ENCODE measurements at regions of chr20 and their contacts with region 1.

Region 1: DNA sequence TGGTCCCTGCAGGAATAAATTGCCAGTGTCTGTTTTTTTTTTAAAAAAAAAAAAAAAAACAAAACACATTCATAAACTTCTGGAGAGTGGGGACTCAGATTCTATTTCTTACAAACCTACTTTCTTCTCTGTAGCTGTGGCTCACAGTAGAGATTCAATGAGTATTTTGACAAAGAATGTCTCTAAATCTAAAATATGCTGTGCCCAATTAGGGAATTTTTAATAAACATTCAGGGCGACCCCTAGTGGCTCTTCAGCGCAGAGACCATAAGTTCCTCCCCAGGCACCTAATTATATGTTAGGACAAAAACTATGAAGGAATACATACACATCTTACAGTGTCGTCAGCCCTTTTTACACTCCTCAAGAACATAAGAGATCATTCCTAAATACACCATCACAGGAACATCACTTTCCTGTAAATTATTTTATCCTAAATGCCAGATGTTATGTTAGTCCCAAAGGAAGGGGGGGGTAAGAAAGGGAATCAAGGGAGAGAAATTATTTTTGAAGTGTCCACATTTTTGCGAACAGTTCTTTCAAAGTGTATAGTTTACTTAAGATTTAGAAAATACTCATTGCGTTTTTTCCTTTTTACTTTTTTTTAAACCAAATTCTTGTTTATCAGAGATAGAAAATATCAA is 21.8 kb upstream of the NAA20 start:
- DNase-seq: peak; percentile 57
- CTCF ChIP-seq: peak; percentile 72

Region 2: GRCh38 chr20:19784511-19785172 is 210.7 kb before region 1 on chr20:
- CTCF ChIA-PET with region 1: interaction called, 25 read pairs
- POLR2A ChIA-PET with region 1: no interaction called
- DNase-seq: peak; percentile 60
- CTCF ChIP-seq: peak; percentile 48

Region 3: DNA sequence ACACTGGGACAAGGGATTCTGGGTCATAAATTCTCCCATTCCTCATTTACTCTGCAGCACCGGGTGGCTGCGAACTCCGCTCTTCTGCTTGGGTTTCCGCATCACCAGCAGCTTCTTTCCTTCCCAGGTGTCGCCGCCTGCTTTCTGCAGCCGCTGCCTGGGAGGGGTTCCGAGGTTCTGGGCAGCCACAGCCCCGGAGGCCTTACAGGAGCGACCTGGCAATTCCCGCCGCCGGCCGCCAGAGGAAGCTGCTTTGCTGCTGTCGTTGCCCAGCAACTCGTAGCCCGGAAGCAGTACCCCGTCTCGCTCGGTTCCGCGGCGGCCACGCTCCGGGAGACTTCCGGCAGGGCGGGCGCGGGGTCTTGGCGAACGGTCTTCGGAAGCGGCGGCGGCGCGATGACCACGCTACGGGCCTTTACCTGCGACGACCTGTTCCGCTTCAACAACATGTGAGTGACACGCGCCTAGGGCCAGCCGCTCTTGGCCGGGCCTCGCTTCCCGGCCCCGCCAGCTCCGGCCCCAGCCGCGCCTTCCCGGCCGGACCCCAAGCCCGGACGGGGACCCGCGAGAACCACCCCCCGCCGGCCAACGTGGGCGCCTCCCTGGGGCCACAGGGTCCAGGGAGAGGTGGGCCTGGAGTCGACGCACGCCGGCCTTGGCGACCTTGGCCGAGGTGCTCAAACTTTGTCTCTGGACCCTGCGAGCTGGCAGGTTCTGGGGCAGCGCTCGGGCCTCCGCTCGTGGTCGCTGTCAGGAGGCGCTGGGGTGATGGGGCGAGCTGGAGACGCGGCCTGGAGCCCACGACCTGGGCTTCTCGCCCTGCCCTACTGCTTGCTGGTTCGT is 21.9 kb after region 1 on chr20 and contains the start of gene NAA20:
- CTCF ChIA-PET with region 1: interaction called, 20 read pairs
- POLR2A ChIA-PET with region 1: no interaction called
- DNase-seq: peak; percentile 96
- CTCF ChIP-seq: peak; percentile 80

Region 4: DNA sequence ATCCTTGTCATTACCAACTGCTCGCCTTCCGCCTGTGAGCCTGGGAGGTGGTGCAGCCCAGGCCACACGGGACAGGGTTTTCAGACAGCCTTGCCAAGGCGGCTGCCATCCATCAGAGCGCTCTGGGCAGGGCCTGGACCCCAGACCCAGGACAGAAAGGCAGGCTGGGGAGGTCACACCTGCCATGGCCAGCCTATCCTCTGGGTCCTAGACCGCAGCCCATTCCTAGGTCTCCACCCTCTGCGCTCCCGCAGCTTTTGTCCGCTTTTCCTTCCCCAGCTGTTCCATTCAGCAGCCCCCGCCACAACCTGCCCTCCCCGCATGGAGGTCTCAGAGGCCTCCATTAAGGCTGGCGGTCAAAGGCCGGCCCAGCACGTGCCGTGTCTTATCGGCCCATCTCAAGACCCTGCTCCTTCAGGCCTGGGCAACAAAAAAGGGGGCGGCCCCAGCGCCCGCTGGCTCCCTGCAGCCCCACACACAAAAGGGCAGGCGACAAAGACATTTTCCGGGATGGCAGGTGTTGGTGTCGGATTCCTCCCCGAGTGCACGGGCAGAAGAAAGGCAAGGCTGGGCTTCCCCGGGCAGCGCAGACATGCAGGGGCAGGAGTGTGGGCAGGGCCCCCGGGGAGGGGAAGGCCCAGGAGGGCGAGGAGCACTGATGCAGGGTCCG is 400.7 kb after region 1 on chr20:
- CTCF ChIA-PET with region 1: no interaction called
- POLR2A ChIA-PET with region 1: no interaction called
- DNase-seq: no peak
- CTCF ChIP-seq: no peak

Measured in GM10248 (cell line).